Natural killer cell (primary cell): ENCODE measurements at regions of chr4 and their contacts with region 1.

Region 1: GRCh38 chr4:98658287-98659105 is at the start of gene TSPAN5:
- DNase-seq: peak; percentile 81 to 88
- ATAC-seq: peak; percentile 82 to 92 (median 91)
- H3K4me3 ChIP-seq: peak within 1 kb of the TSS; percentile 78
- H3K4me3 Mint-ChIP-seq: peak within 1 kb of the TSS; percentile 90
- H3K27ac ChIP-seq: peak within 1 kb of the TSS; percentile 63
- H3K27ac Mint-ChIP-seq: peak within 1 kb of the TSS; percentile 59 to 86
- H3K4me1 ChIP-seq: peaks cover 29% of the 10 kb centered on the region
- H3K4me1 Mint-ChIP-seq: peaks cover 65 to 77% of the 10 kb centered on the region in 2 donors
- H3K27me3 ChIP-seq: no peaks in the 10 kb centered on the region
- H3K27me3 Mint-ChIP-seq: no peaks in the 10 kb centered on the region
- CTCF ChIP-seq: no peak
- total RNA-seq, gene TSPAN5: 6.8 to 13.7 (median 11.4) TPM

Region 2: GRCh38 chr4:98260579-98261290 is 397.8 kb before region 1 on chr4:
- intact Hi-C with region 1: loop called (anchors 1 kb)
- DNase-seq: peak; percentile 78 to 94
- ATAC-seq: peak; percentile 80 to 90 (median 84)
- H3K4me3 ChIP-seq: peak overlapping the region; percentile 96
- H3K4me3 Mint-ChIP-seq: peak overlapping the region; percentile 91
- H3K27ac ChIP-seq: peak overlapping the region; percentile 73
- H3K27ac Mint-ChIP-seq: peak overlapping the region; percentile 70 to 93
- H3K4me1 ChIP-seq: peaks cover 15% of the 10 kb centered on the region
- H3K4me1 Mint-ChIP-seq: peaks cover 43 to 46% of the 10 kb centered on the region in 2 donors
- H3K27me3 ChIP-seq: no peaks in the 10 kb centered on the region
- H3K27me3 Mint-ChIP-seq: no peaks in the 10 kb centered on the region
- CTCF ChIP-seq: no peak

Region 3: GRCh38 chr4:98620087-98620784 is 38.3 kb before region 1 on chr4:
- intact Hi-C with region 1: loop called (anchors 5 kb)
- DNase-seq: no peak
- ATAC-seq: peak; percentile 32 to 76 (median 35)
- H3K4me3 ChIP-seq: no peak overlapping the region
- H3K4me3 Mint-ChIP-seq: peak overlapping the region; percentile 21
- H3K27ac ChIP-seq: no peak overlapping the region
- H3K27ac Mint-ChIP-seq: peak overlapping the region; percentile 32 to 75
- H3K4me1 ChIP-seq: peaks cover 42% of the 10 kb centered on the region
- H3K4me1 Mint-ChIP-seq: peaks cover 70 to 71% of the 10 kb centered on the region in 2 donors
- H3K27me3 ChIP-seq: no peaks in the 10 kb centered on the region
- H3K27me3 Mint-ChIP-seq: no peaks in the 10 kb centered on the region
- CTCF ChIP-seq: no peak

Region 4: GRCh38 chr4:98928505-98929340 is 270.2 kb after region 1 on chr4 and contains the start of gene EIF4E:
- intact Hi-C with region 1: loop called (anchors 5 kb)
- DNase-seq: peak; percentile 92 to 99
- ATAC-seq: peak; percentile 74 to 92 (median 86)
- H3K4me3 ChIP-seq: peak within 1 kb of the TSS; percentile 99
- H3K4me3 Mint-ChIP-seq: peak within 1 kb of the TSS; percentile 99
- H3K27ac ChIP-seq: peak within 1 kb of the TSS; percentile 95
- H3K27ac Mint-ChIP-seq: peak within 1 kb of the TSS; percentile 93 to 98
- H3K4me1 ChIP-seq: peaks cover 12% of the 10 kb centered on the region
- H3K4me1 Mint-ChIP-seq: peaks cover 20 to 27% of the 10 kb centered on the region in 2 donors
- H3K27me3 ChIP-seq: no peaks in the 10 kb centered on the region
- H3K27me3 Mint-ChIP-seq: no peaks in the 10 kb centered on the region
- CTCF ChIP-seq: no peak
- total RNA-seq, gene EIF4E: 67.4 to 92.4 (median 75.5) TPM

Region 5: DNA sequence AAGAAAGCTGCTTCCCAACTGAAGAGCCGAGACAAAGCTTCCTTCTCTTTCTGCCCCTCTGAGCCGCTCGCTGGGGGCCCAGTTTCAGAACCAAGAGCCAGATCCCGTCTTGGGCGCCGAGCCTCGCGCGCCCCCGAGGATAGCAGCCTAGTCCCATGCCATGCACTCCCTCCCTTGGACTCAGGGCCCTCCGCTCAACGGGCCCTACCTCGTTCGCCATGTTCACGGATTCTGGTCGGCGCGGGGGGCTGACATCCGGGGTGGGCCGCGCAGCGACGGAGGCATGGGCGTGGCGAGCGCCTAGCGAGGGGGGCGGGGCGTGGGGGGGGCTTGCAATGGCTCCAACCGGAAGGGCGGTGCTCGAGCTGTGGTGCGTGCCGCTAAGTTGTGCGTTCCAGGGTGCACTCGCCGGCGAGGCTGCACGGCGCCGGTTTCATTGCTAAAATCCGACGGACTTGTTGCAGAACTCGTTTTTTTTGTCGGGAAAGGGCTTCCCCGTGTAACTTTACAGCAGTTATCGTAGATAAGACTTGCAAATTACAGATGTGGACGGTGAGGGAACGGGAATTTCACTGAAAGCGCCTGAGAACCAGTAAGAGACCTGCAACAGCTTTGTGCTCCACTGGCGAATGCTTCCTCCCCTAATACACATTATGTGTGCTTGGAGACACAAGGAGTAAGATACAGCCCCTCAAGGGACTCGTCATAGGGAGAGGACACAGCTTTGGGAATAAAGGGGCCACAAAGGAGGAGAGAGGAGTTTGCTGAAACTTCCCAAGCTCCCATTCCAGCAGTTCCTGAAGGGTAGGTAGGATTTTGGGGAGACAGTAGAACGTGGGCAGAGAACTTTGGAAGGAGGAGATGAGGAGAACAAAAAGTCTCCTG is 430.2 kb after region 1 on chr4 and contains the start of gene ADH5:
- intact Hi-C with region 1: loop called (anchors 1 kb)
- DNase-seq: peak; percentile 78 to 94
- ATAC-seq: peak; percentile 92 to 98 (median 93)
- H3K4me3 ChIP-seq: peak within 1 kb of the TSS; percentile 74
- H3K4me3 Mint-ChIP-seq: peak within 1 kb of the TSS; percentile 98
- H3K27ac ChIP-seq: peak within 1 kb of the TSS; percentile 89
- H3K27ac Mint-ChIP-seq: peak within 1 kb of the TSS; percentile 96 to 99
- H3K4me1 ChIP-seq: peaks cover 19% of the 10 kb centered on the region
- H3K4me1 Mint-ChIP-seq: peaks cover 59 to 66% of the 10 kb centered on the region in 2 donors
- H3K27me3 ChIP-seq: no peaks in the 10 kb centered on the region
- H3K27me3 Mint-ChIP-seq: no peaks in the 10 kb centered on the region
- CTCF ChIP-seq: no peak
- total RNA-seq, gene ADH5: 54.3 to 80.4 (median 62.5) TPM